GM10248 (cell line): ENCODE measurements at regions of chr7 and their contacts with region 1.

Region 1: DNA sequence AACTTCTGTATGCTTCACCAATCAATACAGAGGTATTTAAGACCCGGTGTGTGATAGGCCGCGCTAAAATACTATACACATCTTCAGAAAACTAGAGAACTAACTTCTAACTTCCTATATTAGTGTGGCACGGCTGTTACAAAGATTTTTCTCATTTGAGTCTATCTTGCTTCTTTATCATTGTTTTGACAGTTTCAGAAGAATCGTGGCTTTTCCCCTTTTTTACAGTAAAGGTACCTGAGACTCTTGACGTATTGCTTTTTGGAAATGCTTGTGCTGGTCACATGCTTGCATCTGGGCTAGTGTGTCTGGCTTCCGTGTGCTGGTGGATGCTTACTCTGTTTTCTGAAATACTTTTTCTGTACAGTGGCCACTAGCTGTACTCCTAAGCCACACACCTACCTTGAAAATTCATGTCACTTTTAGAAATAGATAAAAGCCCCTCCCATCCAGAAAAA is 12.7 kb downstream of the IKZF1 start:
- DNase-seq: peak; percentile 56
- CTCF ChIP-seq: no peak

Region 2: GRCh38 chr7:50335795-50336754 is 18.8 kb after region 1 on chr7:
- CTCF ChIA-PET with region 1: interaction called, 28 read pairs
- POLR2A ChIA-PET with region 1: no interaction called
- DNase-seq: no peak
- CTCF ChIP-seq: peak; percentile 29

Region 3: DNA sequence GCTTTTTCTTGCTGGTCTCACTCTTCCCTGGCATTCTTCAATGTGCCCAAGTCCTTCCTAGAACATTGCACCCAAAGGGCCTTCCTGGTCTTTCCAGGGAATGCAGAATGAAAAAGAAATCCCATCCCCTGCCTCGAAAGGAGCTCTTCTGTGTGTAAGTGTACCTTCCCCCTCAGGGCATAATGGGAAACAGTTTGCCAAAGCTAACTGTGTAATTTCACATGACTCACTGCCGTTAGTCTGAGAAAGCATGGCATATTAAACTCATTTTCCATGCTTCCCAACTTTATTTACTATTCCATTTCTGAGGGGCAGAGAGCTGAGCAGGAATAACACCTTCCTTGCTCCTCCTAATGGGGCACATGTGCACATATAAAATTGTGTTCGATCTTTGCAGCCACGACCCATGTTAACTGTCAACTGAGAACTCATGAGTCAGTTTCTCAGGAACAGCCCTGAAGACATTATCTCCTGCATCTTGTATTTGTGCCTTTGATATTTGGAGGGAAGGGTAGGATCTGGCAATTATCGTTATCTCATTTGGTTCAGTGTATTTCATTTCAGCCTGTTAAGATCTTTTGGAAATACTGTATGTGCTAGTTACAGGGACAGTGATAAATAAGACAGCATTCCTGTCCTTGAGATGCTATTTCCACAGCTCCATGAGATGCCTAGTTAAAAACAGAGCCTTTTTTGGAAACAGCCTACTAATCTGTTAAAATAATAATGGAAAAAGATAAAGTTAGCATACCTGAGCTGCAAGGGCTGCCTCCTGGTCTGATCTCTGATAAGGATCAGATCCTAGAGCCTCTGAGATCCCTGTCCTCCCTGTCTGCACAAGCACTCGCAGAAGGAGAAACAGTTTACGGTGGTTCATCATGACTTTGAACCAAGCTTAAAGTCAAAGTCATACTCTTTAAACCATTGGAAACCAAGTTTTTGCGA is 29.6 kb after region 1 on chr7:
- CTCF ChIA-PET with region 1: no interaction called
- POLR2A ChIA-PET with region 1: no interaction called
- DNase-seq: no peak
- CTCF ChIP-seq: no peak